Sigmoid colon (tissue), 7 donors: ENCODE measurements at regions of chr20 and their contacts with region 1.

Region 1: GRCh38 chr20:53547664-53548239 is 45.9 kb downstream of the ZNF217 start:
- DNase-seq: peak; percentile 50
- H3K4me3 ChIP-seq: no peak overlapping the region
- H3K27ac ChIP-seq: no peak overlapping the region
- H3K4me1 ChIP-seq: peaks cover 0 to 10% (median 7%) of the 10 kb centered on the region in 4 donors
- H3K27me3 ChIP-seq: no peaks in the 10 kb centered on the region
- CTCF ChIP-seq: peak in 3 of 4 experiments; percentile 42 to 71 (median 70)
- EP300 ChIP-seq: no peak
- POLR2A ChIP-seq: no peak

Region 2: GRCh38 chr20:52242237-52243230 is 1305.2 kb before region 1 on chr20:
- intact Hi-C with region 1: loop called (anchors 5 kb)
- DNase-seq: no peak
- H3K4me3 ChIP-seq: no peak overlapping the region
- H3K27ac ChIP-seq: no peak overlapping the region
- H3K4me1 ChIP-seq: no peaks in the 10 kb centered on the region
- H3K27me3 ChIP-seq: no peaks in the 10 kb centered on the region
- CTCF ChIP-seq: peak in 3 of 4 experiments; percentile 18 to 66 (median 41)
- EP300 ChIP-seq: no peak
- POLR2A ChIP-seq: no peak

Region 3: DNA sequence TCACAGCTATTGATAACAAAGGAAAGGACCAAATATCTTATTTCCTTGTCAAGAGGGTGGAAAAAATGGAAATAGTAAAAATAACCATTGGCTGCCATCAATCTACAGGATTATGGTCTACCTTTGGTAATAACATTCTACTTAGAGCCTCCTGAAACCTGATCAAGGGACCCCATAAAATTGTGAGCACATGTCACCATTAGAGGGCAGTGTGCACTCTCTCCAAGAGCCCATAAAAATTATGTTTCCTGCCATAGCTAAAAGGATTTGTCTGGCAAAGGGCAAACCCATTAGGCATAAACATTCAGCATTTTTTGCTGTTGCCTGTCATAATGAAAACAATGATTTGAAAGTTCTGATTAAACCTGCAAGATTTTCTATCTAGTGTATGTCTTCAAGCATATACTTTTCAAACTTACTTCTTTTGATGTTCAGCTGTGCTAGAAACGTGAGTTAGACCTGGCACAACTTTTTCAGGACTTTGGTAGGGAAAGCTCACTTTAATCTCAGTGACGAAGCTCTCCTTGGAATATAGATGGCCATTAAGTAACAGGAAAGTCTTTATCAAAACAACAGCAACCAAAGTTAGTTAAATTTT is 1235.5 kb before region 1 on chr20:
- intact Hi-C with region 1: loop called (anchors 5 kb)
- DNase-seq: no peak
- H3K4me3 ChIP-seq: no peak overlapping the region
- H3K27ac ChIP-seq: no peak overlapping the region
- H3K4me1 ChIP-seq: peaks cover 0 to 5% (median 0%) of the 10 kb centered on the region in 4 donors
- H3K27me3 ChIP-seq: peaks cover 0 to 3% (median 0%) of the 10 kb centered on the region in 3 donors
- CTCF ChIP-seq: peak in 3 of 4 experiments; percentile 30 to 47 (median 32)
- EP300 ChIP-seq: no peak
- POLR2A ChIP-seq: no peak

Region 4: GRCh38 chr20:53408691-53409446 is 138.9 kb before region 1 on chr20:
- intact Hi-C with region 1: no loop called
- DNase-seq: no peak
- H3K4me3 ChIP-seq: no peak overlapping the region
- H3K27ac ChIP-seq: no peak overlapping the region
- H3K4me1 ChIP-seq: no peaks in the 10 kb centered on the region
- H3K27me3 ChIP-seq: no peaks in the 10 kb centered on the region
- CTCF ChIP-seq: no peak
- EP300 ChIP-seq: no peak
- POLR2A ChIP-seq: no peak